Cardiac septum (tissue), 1 donor: ENCODE measurements at regions of chr17 and their contacts with region 1.

Region 1: GRCh38 chr17:41966463-41967140 is at the start of gene CNP:
- DNase-seq: peak; percentile 96
- total RNA-seq, gene CNP: 24.2 TPM

Region 2: DNA sequence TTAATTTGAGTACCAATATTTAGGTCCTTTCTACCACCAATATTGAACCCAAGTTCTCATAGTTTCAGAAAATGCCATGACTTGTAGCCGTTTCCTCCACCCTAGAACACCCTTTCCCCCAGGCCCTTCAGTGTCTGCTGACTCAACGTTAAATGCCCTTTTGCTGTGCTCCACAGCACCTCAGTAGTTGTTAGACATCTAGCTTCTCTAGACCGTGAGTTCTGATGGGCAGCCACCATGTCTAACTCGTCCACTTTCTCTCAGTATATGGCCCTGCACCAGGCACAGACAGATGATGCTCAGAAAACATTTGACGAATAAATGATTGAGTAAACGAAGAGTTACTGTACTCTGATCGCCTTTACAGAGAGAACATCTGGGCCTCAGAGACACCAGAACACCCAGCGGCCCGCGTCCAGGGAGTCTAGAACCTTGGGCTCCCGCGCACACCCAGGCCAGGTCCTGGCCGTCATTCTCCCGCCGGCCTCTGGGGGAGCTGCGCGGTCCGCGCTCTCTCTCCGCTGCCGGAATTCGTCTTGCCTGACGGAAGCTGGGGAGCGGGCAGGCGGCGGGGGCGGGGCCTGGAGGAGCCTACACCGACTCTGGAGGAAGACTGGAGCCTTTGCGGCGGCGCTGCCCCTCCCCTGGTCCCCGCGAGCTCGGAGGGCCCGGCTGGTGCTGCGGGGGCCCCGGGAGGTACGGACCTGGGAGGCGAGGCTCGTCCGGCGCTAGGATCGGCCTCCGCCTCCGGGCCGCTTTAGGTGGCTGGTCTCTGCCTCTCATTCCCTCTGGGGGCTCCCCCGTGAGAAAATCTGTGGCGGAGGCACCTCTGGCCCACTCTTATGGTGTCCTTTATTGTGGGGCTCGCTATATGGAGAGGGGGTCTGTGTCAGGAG is 53.2 kb after region 1 on chr17 and contains the start of gene NKIRAS2:
- intact Hi-C with region 1: loop called (anchors 2 kb)
- DNase-seq: peak; percentile 98
- total RNA-seq, gene NKIRAS2: 50.7 TPM

Region 3: GRCh38 chr17:42087736-42088705 is 121.4 kb after region 1 on chr17:
- intact Hi-C with region 1: no loop called
- DNase-seq: no peak

Region 4: DNA sequence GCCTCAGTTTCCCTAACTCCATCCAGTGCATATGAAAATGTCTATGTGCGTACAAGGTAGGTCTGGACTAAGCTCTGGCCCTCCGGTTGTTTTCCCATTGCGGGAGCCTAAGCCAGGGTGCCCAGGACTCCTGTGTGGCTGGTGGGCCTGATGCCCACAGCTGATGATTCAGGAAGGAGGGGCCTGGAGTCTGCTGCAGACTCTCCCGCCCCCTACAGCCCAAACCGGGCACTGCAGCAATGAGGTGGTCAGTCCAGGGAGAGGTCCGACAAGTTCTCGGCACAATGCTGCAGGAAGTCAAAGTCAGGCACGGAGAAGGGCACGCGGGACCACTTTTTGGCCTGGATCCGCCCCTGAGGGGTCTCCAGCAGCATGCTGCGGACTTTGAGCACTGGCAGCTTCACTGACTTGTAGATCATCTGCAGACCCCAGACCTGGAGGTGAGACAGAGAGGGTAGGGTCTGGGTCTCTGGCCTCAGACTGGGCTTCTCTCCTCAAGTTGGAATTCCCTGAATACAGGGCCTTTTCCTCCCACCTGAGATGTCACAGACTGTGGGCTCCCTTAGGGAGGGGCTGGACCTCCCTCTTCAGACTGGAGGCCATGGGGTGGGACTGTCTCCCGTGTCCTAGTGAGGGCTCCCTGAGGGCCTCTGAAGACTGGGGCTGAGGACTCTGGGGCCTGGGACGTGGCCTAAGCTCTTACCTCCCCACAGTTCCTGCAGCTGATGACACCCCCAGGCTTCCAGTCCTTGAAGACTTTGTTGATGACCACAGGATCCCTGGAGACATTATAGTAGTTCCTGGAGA is 135.1 kb after region 1 on chr17:
- intact Hi-C with region 1: loop called (anchors 5 kb)
- DNase-seq: no peak

Region 5: DNA sequence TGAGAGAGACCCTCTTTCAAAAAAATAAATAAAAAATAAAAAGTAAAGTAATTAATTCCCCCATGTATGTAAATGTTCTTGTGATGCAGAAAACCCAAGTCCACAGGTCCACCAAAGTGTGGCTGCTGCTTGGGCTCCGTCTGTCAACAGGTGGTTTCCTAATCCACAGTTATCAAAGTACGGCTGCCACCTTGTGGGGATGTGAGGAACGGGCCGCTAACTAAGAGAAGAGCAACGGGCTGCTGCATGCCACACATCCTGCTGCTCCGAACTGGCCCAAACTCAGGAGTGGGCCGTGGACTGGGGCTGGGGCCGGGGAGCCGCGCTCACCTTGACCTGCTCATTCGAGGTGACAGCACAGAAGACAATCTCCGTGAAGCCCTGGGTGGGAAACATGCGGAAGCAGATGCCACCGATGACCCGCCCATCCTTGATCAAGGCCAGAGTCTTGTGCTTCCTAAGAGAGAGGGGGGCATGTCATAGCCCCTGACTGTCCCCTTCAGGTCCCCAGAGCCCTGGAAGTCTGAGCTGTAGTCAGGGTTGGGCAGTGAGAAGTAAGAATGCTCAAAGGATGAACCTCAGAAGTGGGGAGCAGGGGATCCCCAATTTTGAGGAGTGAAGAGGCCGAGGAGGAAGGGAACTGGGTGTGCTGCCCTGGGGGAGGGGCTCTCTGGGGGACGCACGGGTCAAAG is 150.2 kb after region 1 on chr17:
- intact Hi-C with region 1: loop called (anchors 1 kb)
- DNase-seq: peak; percentile 87